ENCODE measurements at regions of chr10 and their contacts with region 1.

Region 1: GRCh38 chr10:71708301-71708703 is 11.3 kb downstream of the C10orf105 start:
- DNase-seq: peak; percentile 64
- H3K4me3 Mint-ChIP-seq: no peak overlapping the region
- H3K27ac Mint-ChIP-seq: peak overlapping the region; percentile 80
- H3K4me1 Mint-ChIP-seq: peaks cover 39% of the 10 kb centered on the region
- H3K27me3 Mint-ChIP-seq: no peaks in the 10 kb centered on the region

Region 2: GRCh38 chr10:71486484-71487114 is 221.7 kb before region 1 on chr10:
- CTCF ChIA-PET with region 1: no interaction called
- POLR2A ChIA-PET with region 1: no interaction called
- DNase-seq: peak; percentile 29
- H3K4me3 Mint-ChIP-seq: no peak overlapping the region
- H3K27ac Mint-ChIP-seq: no peak overlapping the region
- H3K4me1 Mint-ChIP-seq: no peaks in the 10 kb centered on the region
- H3K27me3 Mint-ChIP-seq: no peaks in the 10 kb centered on the region

Region 3: GRCh38 chr10:71719042-71719441 is 10.7 kb after region 1 on chr10:
- CTCF ChIA-PET with region 1: interaction called, 40 read pairs
- POLR2A ChIA-PET with region 1: no interaction called
- DNase-seq: no peak
- H3K4me3 Mint-ChIP-seq: no peak overlapping the region
- H3K27ac Mint-ChIP-seq: no peak overlapping the region
- H3K4me1 Mint-ChIP-seq: peaks cover 37% of the 10 kb centered on the region
- H3K27me3 Mint-ChIP-seq: no peaks in the 10 kb centered on the region

Measured in activated CD4-positive, alpha-beta T cell treated with anti-CD3 and anti-CD28 coated beads, Interleukin-2, amount 10 ng/mL, durations not matched to agents 7 days and 5 days (primary cell).